Activated T-helper 2 cell treated with anti-CD3 and anti-CD28 coated beads, Interferon-gamma antibody, Interleukin-2, Interleukin-4, amounts not matched to agents 10 μg/mL and 5 μg/mL and 100 μg/mL, durations not matched to agents 14 hours and 24 hours and 36 hours (primary cell): ENCODE measurements at regions of chr4 and their contacts with region 1.

Region 1: DNA sequence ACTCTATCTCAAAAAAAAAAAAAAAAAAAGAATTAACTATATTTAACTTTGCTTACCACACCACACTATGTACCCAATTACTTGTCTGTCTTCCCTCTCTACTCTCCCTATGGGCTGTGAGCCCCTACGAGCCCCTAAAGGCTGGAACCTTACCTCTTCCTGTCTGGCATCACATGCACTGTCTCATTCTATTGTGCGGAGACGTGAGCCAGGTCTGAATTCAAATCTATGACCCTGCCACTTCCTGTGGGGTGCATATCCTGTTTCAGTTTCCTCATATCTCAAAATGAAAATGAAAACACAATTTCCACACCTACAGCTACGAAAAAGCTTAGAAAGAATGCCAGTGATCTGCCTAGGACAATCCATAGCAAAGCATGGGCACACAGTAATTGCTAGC is 42.9 kb upstream of the HS3ST1 start:
- DNase-seq: peak; percentile 59
- H3K4me3 Mint-ChIP-seq: peak overlapping the region; percentile 73
- H3K27ac Mint-ChIP-seq: peak overlapping the region; percentile 84
- H3K4me1 Mint-ChIP-seq: peaks cover 37% of the 10 kb centered on the region
- H3K27me3 Mint-ChIP-seq: peaks cover 9% of the 10 kb centered on the region

Region 2: DNA sequence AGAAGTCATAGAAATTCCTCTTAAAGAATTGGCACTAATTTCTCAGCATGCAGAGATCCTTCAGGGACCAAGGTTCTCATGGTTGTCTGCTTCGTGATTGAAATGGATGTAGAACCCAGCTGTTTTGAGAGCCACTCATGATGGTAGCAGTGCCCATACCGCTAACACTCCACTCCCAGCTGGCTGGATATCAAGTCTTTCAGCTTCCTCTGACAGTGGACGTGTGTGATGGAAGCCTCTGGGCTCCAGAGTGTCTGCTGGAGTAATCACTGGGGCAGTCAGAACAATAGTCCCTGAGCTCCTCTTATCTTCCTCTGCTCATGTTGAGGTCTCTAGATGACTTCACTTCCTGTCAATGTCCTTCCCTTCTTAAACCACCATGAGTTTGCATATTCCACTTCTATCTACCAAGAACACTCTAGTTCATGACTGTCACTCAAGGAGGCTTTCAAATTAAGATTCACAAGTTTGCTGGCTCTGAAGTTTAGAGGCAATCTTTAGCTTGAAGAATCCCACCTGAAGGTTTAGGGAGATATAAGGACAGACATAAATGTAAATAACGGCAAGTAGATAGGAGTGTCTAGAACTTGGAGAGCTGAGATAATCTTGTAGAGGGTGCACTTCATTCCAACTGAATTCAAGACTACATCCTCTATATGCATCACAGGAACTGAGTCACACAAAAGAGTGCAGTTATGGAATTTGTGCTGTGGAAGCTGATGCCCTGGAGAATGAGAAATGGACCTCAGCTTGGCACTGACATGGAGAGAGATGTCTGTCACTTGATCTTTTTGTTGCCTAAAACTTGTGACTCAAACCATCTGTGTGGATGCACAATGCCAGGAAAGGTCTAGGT is 1290.5 kb before region 1 on chr4:
- intact Hi-C with region 1: loop called (anchors 10 kb)
- DNase-seq: peak; percentile 30
- H3K4me3 Mint-ChIP-seq: no peak overlapping the region
- H3K27ac Mint-ChIP-seq: peak overlapping the region; percentile 87
- H3K4me1 Mint-ChIP-seq: peaks cover 38% of the 10 kb centered on the region
- H3K27me3 Mint-ChIP-seq: no peaks in the 10 kb centered on the region

Region 3: DNA sequence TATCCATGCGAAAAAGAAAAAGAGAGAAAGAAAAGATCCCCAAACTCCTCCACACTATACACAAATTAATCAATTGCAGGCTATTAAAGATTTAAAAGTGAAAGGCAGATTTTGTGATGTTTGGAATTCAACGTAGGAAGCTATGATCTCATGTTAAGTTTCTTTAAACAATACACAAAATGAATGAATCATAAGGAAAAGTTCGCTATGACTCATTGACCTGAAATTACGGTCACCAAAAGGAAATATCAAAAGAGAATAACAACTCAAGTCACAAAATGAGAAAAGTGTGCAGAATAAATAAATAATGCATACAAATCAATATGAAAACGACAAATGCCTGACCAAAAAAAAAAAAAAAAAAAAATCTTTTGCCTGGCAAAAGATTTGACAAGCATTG is 815.6 kb before region 1 on chr4:
- intact Hi-C with region 1: loop called (anchors 5 kb)
- DNase-seq: no peak
- H3K4me3 Mint-ChIP-seq: peak overlapping the region; percentile 55
- H3K27ac Mint-ChIP-seq: peak overlapping the region; percentile 90
- H3K4me1 Mint-ChIP-seq: peaks cover 42% of the 10 kb centered on the region
- H3K27me3 Mint-ChIP-seq: no peaks in the 10 kb centered on the region

Region 4: DNA sequence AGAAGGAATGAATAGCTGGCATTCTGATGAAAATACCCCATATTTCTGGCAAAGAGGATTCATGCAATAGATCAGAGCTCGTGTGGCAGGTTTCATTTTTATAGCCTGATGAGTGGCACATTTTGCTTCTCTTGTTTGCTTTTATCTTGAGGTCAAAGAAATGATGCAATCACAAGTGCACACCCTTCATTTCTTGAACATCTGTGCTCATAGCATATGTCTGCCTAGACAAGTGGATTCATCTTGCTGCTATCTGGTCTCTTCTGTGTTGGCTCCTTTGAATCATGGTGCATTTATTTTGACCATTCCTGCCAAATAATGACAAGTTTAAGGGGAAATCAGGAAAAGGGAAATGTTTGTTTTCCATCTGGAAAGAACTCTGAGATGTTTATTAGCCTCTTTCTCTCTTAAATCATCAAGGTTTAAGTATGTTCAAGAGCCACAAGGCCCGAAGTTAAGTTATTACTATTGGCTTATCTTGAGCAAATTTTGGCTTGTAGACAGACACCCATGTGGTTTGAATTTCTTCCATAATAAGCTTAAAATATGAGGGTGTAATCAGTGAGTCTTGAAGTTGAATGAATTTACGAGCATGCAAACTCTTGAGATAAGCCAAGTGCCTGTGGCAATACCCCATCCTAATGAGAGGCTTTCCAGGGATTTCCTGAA is 16.4 kb after region 1 on chr4:
- intact Hi-C with region 1: loop called (anchors 2 kb)
- DNase-seq: no peak
- H3K4me3 Mint-ChIP-seq: no peak overlapping the region
- H3K27ac Mint-ChIP-seq: no peak overlapping the region
- H3K4me1 Mint-ChIP-seq: peaks cover 32% of the 10 kb centered on the region
- H3K27me3 Mint-ChIP-seq: peaks cover 2% of the 10 kb centered on the region

Region 5: DNA sequence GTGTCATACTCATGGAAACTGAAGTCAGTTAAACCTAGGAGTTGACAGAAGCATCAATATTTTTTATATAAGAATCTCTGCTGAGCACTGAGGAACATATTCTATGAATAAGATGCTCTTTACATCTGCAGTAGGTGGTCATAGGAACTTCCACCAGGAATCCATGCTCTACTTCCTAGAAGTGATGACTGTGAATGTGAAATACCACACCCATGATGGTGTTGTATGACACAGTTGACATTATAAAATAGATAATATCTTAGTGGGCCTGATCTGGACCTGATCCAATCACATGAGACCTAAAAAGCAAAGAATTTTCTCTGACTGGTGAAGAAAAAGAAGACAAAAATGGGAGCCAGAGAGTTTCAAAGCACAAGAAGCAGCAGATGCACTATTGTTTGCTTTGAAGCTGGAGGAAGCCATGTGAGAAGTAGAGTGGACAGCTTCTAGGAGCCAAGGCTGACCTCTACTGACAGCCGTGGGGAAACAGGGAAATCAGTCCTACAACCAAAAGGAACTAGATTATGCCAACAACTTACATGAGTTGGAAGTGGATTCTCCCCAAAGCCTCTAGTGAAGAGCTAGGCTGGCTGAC is 25.7 kb after region 1 on chr4:
- intact Hi-C with region 1: loop called (anchors 1 kb)
- DNase-seq: no peak
- H3K4me3 Mint-ChIP-seq: no peak overlapping the region
- H3K27ac Mint-ChIP-seq: peak overlapping the region; percentile 67
- H3K4me1 Mint-ChIP-seq: peaks cover 24% of the 10 kb centered on the region
- H3K27me3 Mint-ChIP-seq: peaks cover 6% of the 10 kb centered on the region

Region 6: DNA sequence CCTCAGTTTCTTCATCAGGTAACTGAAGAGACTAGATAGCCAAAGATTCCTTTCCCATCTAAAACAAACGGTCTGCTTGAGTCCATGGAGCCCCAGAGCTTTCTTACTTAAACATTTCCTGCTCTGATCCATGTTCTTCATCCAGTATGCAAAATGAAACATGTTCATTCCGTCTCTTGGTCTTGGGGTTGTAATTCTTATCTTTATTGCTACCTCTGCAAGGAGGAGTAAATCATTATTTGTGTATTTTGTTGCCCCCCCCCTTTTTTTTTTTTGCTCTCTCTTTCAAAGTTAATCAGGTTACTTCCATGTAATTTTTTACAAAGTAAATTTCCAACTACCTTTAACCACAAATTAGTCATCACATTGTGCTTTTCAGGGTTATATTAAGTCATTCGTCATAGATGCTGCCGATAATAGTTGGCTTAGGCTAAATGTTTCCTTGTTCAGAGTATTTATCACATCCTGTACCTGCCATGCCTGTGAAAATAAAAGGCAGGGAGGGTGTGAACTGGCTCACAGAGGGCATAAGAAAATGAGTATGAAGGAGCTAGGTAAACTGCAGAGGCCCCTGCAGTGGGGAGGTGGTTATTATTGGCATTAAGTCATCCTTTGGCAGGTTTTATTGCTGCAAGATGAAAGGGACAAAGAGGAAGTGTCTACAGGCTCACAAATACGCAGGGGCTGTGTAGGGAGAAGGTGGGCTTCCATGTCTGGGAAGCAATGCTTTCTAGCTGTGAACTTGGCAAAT is 33.8 kb after region 1 on chr4:
- intact Hi-C with region 1: loop called (anchors 2 kb)
- DNase-seq: peak; percentile 11
- H3K4me3 Mint-ChIP-seq: no peak overlapping the region
- H3K27ac Mint-ChIP-seq: peak overlapping the region; percentile 58
- H3K4me1 Mint-ChIP-seq: peaks cover 32% of the 10 kb centered on the region
- H3K27me3 Mint-ChIP-seq: peaks cover 2% of the 10 kb centered on the region

Region 7: GRCh38 chr4:11514779-11515419 is 43.3 kb after region 1 on chr4:
- intact Hi-C with region 1: loop called (anchors 2 kb)
- DNase-seq: no peak
- H3K4me3 Mint-ChIP-seq: no peak overlapping the region
- H3K27ac Mint-ChIP-seq: no peak overlapping the region
- H3K4me1 Mint-ChIP-seq: peaks cover 30% of the 10 kb centered on the region
- H3K27me3 Mint-ChIP-seq: peaks cover 5% of the 10 kb centered on the region